ENCODE measurements at regions of chr3 and their contacts with region 1.

Region 1: GRCh38 chr3:46976326-46977190 is at the start of gene CCDC12:
- DNase-seq: peak; percentile 79 to 98 (median 96)
- ATAC-seq: peak; percentile 87
- H3K4me3 ChIP-seq: peak within 1 kb of the TSS; percentile 98
- H3K4me3 Mint-ChIP-seq: peak within 1 kb of the TSS; percentile 95 to 100 (median 99)
- H3K27ac ChIP-seq: peak within 1 kb of the TSS; percentile 90
- H3K27ac Mint-ChIP-seq: peak within 1 kb of the TSS; percentile 94 to 99 (median 98)
- H3K4me1 ChIP-seq: peaks cover 46 to 53% of the 10 kb centered on the region in 2 donors
- H3K4me1 Mint-ChIP-seq: peaks cover 44 to 82% (median 63%) of the 10 kb centered on the region in 7 donors
- H3K27me3 ChIP-seq: no peaks in the 10 kb centered on the region
- H3K27me3 Mint-ChIP-seq: no peaks in the 10 kb centered on the region
- total RNA-seq, gene CCDC12: 51.6 to 61.5 (median 56.9) TPM

Region 2: DNA sequence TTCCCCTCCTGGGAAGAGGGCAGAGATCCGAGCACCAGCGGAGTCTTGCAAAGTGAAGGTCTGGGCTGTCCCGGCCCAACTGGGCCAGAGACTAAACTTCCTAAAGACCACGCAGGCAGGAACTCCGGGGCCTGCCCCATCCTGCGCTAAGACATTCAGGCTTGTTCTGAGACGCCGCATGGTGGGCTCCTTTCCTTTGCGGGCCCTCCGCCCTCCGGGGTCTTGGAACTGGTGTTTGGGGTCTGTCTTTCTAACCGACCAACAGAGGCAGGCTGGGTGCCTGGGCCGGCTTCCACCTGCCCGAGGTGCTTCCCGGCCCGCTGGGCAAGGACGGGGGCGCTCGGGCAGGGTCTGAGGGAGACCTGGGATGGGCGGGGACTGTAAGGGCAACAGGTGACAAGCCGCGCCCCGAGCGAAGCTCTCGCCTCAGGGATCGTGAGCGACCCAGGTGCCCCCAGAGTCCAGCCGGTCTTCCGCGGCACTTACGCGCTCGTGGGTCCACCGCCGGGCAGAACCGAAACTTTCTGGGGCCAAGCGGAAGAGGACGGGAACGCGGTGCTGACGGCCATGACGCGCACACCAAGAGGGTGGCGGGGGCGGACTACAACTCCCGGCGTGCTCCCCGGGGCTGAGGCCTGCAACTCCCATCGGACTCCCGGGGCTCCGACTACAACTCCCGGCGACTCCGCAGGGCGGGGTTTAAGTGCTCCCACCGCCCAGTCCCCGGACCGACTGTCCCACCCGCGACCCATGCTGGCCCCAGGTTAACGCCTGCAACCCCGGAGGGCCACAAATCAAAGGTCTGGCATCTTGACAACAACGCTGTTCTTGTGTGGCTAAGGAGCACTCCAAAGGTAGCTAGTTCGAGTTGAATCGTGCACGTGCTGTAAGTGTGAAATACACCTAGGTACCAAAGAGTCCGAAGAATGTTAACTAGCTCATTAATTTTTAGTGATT is 981.0 kb before region 1 on chr3 and contains the start of gene FYCO1:
- CTCF ChIA-PET with region 1: no interaction called
- POLR2A ChIA-PET with region 1: no interaction called
- intact Hi-C with region 1: loop called in 1 of 2 experiments (anchors 10 kb)
- DNase-seq: peak; percentile 75 to 87 (median 86)
- ATAC-seq: peak; percentile 96
- H3K4me3 ChIP-seq: peak within 1 kb of the TSS; percentile 85
- H3K4me3 Mint-ChIP-seq: peak within 1 kb of the TSS; percentile 83 to 93 (median 90)
- H3K27ac ChIP-seq: peak within 1 kb of the TSS; percentile 84
- H3K27ac Mint-ChIP-seq: peak within 1 kb of the TSS; percentile 78 to 96 (median 92)
- H3K4me1 ChIP-seq: peaks cover 22 to 48% of the 10 kb centered on the region in 2 donors
- H3K4me1 Mint-ChIP-seq: peaks cover 10 to 49% (median 37%) of the 10 kb centered on the region in 7 donors
- H3K27me3 ChIP-seq: no peaks in the 10 kb centered on the region
- H3K27me3 Mint-ChIP-seq: peaks cover 3 to 11% (median 8%) of the 10 kb centered on the region in 5 donors
- total RNA-seq, gene FYCO1: 20.0 to 27.5 (median 22.9) TPM

Region 3: GRCh38 chr3:46947981-46948791 is 28.4 kb before region 1 on chr3:
- CTCF ChIA-PET with region 1: no interaction called
- POLR2A ChIA-PET with region 1: interaction called, 3 read pairs
- intact Hi-C with region 1: loop called (anchors 2 kb)
- DNase-seq: peak in 2 of 9 donors; percentile 45 to 58
- ATAC-seq: peak; percentile 77
- H3K4me3 ChIP-seq: no peak overlapping the region
- H3K4me3 Mint-ChIP-seq: peak overlapping the region; percentile 9 to 83 (median 76)
- H3K27ac ChIP-seq: peak overlapping the region; percentile 39
- H3K27ac Mint-ChIP-seq: peak overlapping the region; percentile 70 to 92 (median 86)
- H3K4me1 ChIP-seq: peaks cover 51 to 75% of the 10 kb centered on the region in 2 donors
- H3K4me1 Mint-ChIP-seq: peaks cover 77 to 97% (median 83%) of the 10 kb centered on the region in 7 donors
- H3K27me3 ChIP-seq: no peaks in the 10 kb centered on the region
- H3K27me3 Mint-ChIP-seq: no peaks in the 10 kb centered on the region

Region 4: GRCh38 chr3:47009225-47010110 is 32.9 kb after region 1 on chr3:
- CTCF ChIA-PET with region 1: no interaction called
- POLR2A ChIA-PET with region 1: interaction called, 17 read pairs
- intact Hi-C with region 1: loop called in 1 of 2 experiments (anchors 1 kb)
- DNase-seq: peak; percentile 51 to 75 (median 68)
- ATAC-seq: peak; percentile 93
- H3K4me3 ChIP-seq: peak overlapping the region; percentile 46
- H3K4me3 Mint-ChIP-seq: peak overlapping the region in 9 of 10 donors; percentile 64 to 86 (median 77)
- H3K27ac ChIP-seq: peak overlapping the region; percentile 73
- H3K27ac Mint-ChIP-seq: peak overlapping the region in 6 of 9 donors; percentile 40 to 83 (median 76)
- H3K4me1 ChIP-seq: no peaks in the 10 kb centered on the region
- H3K4me1 Mint-ChIP-seq: peaks cover 5 to 23% (median 7%) of the 10 kb centered on the region in 7 donors
- H3K27me3 ChIP-seq: no peaks in the 10 kb centered on the region
- H3K27me3 Mint-ChIP-seq: no peaks in the 10 kb centered on the region

Region 5: DNA sequence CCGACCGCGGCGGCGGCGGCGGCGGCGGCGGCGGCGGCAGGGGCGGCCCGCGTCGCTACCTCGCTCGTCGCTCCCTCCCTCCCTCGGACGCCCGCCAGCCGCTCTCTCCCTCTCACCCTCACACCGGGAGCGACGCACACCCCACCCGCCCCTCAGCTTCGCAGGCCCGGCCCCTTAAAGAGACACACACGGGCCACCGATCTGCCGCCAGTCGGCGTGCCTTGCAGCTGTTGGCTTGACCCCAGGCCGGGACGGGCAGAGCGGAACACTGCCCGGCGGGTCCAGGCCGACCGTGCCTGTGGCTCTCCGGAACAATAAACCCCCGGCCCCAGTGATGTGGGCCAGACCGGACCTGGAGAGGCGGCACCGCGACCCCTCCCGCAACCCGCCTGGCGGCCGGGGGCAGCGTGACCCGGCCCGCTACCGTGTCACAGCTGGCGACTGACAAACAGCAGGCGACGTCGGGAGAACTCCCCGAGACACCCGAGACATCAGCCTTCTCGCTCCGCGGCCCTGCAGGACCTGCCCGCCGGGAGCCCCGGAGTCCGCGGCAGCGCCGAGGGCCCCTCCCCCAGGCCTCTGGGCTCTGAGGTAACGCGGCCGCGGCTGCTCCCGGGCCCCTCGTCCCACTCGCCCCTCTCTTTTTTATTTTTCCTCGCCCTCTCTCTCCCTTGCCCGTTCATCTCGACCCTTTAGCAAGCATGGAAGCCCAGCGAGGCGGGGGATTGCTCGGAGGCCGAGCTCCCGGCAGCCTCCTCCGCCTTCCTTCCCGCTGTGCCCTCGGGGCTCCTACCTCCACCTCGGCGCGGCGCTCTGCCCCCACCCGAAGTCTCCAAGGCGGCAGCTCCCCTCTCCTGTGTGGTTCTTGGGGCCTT is 187.7 kb after region 1 on chr3 and contains the start of gene SETD2:
- CTCF ChIA-PET with region 1: no interaction called
- POLR2A ChIA-PET with region 1: interaction called, 3 read pairs
- intact Hi-C with region 1: loop called (anchors 1 kb)
- DNase-seq: peak; percentile 67 to 86 (median 82)
- ATAC-seq: peak; percentile 92
- H3K4me3 ChIP-seq: peak within 1 kb of the TSS; percentile 77
- H3K4me3 Mint-ChIP-seq: peak within 1 kb of the TSS; percentile 90 to 99 (median 98)
- H3K27ac ChIP-seq: peak within 1 kb of the TSS; percentile 96
- H3K27ac Mint-ChIP-seq: peak within 1 kb of the TSS; percentile 94 to 99 (median 99)
- H3K4me1 ChIP-seq: peaks cover 30 to 36% of the 10 kb centered on the region in 2 donors
- H3K4me1 Mint-ChIP-seq: peaks cover 34 to 68% (median 56%) of the 10 kb centered on the region in 7 donors
- H3K27me3 ChIP-seq: no peaks in the 10 kb centered on the region
- H3K27me3 Mint-ChIP-seq: no peaks in the 10 kb centered on the region
- total RNA-seq, gene SETD2: 49.2 to 77.3 (median 71.1) TPM

Region 6: DNA sequence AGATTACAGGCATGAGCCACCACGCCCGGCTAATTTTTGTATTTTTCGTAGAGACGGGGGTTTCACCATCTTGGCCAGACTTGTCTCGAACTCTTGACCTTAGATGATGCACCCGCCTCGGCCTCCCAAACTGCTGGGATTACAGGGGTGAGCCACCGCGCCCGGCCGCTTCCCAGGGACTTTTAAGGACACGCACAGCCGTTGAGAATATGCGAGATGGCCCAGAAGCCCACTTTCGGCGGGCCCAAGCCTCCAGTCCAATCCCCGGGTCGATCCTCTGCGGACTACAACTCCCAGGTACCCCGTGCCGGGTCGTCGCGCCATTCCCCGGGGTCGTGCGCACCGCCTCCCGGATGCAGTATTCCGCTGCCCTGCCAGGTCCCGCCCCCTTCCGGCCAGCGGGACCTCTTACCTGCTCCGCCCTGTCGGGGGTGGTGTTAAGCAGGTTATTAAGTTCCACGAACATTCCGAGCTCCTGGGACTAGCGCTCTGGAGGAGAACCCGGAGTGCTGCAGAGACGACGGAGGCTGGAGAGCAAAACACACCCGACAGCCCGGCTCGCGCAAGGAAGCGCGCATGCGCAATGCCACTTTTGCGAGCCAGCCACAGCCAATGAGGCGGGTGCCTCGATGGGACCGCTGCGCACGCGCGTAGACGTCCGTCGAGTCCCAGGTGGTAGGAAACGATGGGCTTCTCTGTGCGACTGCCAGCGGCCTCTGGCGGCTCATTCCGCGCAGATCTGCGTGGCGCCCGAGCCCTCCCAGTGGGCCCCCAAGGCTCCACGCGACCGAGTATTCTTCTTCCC is 536.8 kb after region 1 on chr3 and contains the start of gene ELP6:
- CTCF ChIA-PET with region 1: no interaction called
- POLR2A ChIA-PET with region 1: interaction called, 3 read pairs
- intact Hi-C with region 1: loop called in 1 of 2 experiments (anchors 1 kb)
- DNase-seq: peak; percentile 95 to 100 (median 99)
- ATAC-seq: peak; percentile 98
- H3K4me3 ChIP-seq: peak within 1 kb of the TSS; percentile 99
- H3K4me3 Mint-ChIP-seq: peak within 1 kb of the TSS; percentile 92 to 99 (median 97)
- H3K27ac ChIP-seq: peak within 1 kb of the TSS; percentile 95
- H3K27ac Mint-ChIP-seq: peak within 1 kb of the TSS; percentile 96 to 99 (median 98)
- H3K4me1 ChIP-seq: peaks cover 0 to 11% of the 10 kb centered on the region in 2 donors
- H3K4me1 Mint-ChIP-seq: peaks cover 6 to 31% (median 25%) of the 10 kb centered on the region in 7 donors
- H3K27me3 ChIP-seq: no peaks in the 10 kb centered on the region
- H3K27me3 Mint-ChIP-seq: peaks cover 0 to 8% (median 0%) of the 10 kb centered on the region in 5 donors
- total RNA-seq, gene ELP6: 18.8 to 43.1 (median 25.3) TPM

Measured in naive thymus-derived CD4-positive, alpha-beta T cell (primary cell).